ENCODE measurements at regions of chr18 and their contacts with region 1.

Region 1: GRCh38 chr18:67217551-67218166 is 298.9 kb downstream of the DSEL start:
- DNase-seq: peak in 6 of 10 donors; percentile 16 to 63 (median 53)

Region 2: GRCh38 chr18:67515945-67516538 is 298.4 kb after region 1 on chr18:
- intact Hi-C with region 1: loop called (anchors 5 kb)
- DNase-seq: peak; percentile 80 to 98 (median 88)

Region 3: GRCh38 chr18:68623342-68623741 is 1405.7 kb after region 1 on chr18:
- intact Hi-C with region 1: loop called (anchors 5 kb)
- DNase-seq: peak in 9 of 10 donors; percentile 19 to 90 (median 64)

Region 4: DNA sequence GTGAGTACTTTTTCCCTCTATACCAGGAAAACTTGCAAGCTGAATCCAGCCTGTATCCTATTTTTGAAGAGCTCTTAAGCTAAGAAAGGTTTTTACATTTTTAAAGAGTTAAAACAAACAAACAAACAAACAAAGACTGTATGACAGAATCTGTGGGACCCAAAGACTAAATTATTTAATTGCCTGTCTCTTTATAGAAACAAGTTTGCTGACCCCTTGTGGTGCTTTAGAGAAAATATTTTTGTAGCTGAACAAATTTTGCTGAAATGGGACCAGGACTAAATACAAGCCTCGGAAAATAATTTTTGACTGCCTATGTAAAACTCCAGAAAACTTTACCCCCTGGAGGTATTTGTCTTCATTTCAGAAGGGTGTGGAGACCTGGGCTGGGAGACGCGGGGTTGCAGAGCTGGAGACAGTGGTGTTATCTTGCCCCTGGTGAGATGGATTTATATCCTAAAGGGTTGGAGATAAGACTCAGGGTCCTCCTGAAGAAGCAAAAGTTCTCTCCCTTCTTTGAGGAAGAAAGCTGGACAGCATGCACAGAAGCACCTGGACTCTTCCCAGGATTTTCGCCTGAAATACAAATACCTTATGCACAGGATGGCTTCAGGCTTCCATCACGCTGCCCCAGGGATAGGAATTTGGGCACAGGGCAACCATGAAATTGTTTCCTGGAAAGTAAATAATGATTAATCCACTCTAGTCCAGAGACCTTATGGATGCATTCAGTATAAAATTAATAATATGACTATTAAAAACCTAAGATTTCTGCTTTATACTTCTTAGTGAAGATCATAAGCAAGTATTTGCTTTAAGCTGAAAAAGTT is 1442.9 kb after region 1 on chr18:
- intact Hi-C with region 1: loop called (anchors 2 kb)
- DNase-seq: no peak

Region 5: GRCh38 chr18:68735483-68736343 is 1518.1 kb after region 1 on chr18:
- intact Hi-C with region 1: loop called (anchors 10 kb)
- DNase-seq: no peak

Measured in posterior cingulate gyrus (tissue), 11 donors.